PC-9 (cell line): ENCODE measurements at regions of chr9 and their contacts with region 1.

Region 1: GRCh38 chr9:112233768-112234167 is 58.7 kb upstream of the SUSD1 start:
- DNase-seq: peak in 1 of 2 experiments; percentile 51
- H3K4me3 ChIP-seq: no peak overlapping the region
- H3K27ac ChIP-seq: peak overlapping the region; percentile 22
- H3K4me1 ChIP-seq: peaks cover 6% of the 10 kb centered on the region
- H3K27me3 ChIP-seq: no peaks in the 10 kb centered on the region
- CTCF ChIP-seq: no peak

Region 2: DNA sequence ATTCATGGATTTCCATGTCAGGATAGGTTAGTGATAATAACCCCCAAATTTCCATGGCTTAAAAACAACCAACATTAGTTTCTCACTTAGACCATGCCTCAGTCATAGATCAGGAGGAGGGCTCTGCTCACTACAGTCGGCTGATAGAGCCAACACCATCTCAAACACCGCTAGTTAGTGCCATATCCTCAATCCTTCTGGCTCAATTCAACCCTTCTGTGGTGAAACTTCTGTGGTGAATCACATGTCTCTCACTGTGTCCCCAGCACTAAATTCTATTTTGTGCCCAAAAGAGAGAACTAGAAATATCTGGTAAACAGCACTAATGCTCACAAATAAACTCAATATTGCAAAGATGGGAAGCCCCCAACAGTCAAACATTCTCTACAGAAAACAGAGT is 770.7 kb before region 1 on chr9:
- CTCF ChIA-PET with region 1: no interaction called
- POLR2A ChIA-PET with region 1: interaction called, 26 read pairs
- intact Hi-C with region 1: no loop called
- DNase-seq: no peak
- H3K4me3 ChIP-seq: no peak overlapping the region
- H3K27ac ChIP-seq: no peak overlapping the region
- H3K4me1 ChIP-seq: no peaks in the 10 kb centered on the region
- H3K27me3 ChIP-seq: no peaks in the 10 kb centered on the region
- CTCF ChIP-seq: no peak

Region 3: GRCh38 chr9:112315331-112316257 is 81.8 kb after region 1 on chr9:
- CTCF ChIA-PET with region 1: no interaction called
- POLR2A ChIA-PET with region 1: no interaction called
- intact Hi-C with region 1: no loop called
- DNase-seq: no peak
- H3K4me3 ChIP-seq: no peak overlapping the region
- H3K27ac ChIP-seq: peak overlapping the region; percentile 31; the same call in 1 of the 2 replicates
- H3K4me1 ChIP-seq: no peaks in the 10 kb centered on the region
- H3K27me3 ChIP-seq: no peaks in the 10 kb centered on the region
- CTCF ChIP-seq: no peak